ENCODE measurements at regions of chr6 and their contacts with region 1.

Region 1: GRCh38 chr6:144478483-144478882 is 193.3 kb downstream of the UTRN start:
- DNase-seq: peak; percentile 75
- ATAC-seq: peak; percentile 97

Region 2: DNA sequence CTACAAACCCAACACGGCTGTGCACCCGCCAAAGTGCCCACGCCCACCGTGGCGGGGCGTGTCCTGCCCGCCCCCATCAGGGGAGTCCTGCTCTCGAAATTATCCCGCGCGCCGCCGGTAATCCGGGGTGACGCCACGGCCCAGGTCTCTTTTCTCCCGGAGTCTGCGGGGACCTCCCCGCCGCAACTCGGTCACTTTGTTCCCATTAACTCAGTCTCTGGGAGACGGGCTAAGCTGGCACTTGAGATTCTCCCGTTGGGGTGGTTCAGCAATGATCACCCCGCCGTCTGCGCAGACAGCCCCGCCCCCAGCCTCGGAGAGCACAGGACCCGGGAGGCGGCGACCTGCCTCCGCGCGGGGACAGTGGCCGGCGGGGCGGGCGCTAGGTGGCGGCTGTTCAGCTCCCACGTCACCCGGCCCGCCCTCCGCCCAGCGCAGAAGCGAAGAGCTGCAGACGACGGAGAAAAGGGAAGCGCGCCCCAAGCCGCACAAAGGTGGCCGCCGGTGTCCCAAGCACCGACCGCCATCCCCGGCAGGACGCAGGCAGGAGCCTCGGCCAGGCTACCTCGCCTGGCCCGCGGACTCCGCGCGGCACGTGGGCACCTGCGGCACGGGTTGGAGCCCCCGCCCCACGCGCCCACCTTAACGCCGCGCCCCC is 414.6 kb before region 1 on chr6:
- intact Hi-C with region 1: no loop called
- DNase-seq: peak; percentile 96
- ATAC-seq: peak; percentile 97

Region 3: DNA sequence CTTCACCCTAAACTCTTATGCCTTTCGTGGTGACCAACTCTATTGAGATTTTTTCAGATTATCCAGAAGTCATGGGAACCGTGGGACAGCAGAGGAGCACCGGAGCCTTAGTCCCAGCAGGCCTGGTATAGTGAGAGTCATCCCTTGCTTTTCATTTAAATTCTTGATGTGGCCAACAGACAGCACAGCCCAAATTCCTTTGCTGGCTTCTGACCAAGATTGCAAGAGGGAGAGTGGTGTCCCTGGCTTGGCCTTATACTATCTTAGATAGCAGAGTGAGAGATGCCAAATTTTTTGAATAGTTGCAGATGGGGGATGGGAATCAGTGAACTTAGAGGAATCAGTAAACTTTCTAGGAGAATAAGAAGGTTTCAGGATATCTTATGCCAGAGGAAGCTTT is 320.4 kb before region 1 on chr6:
- intact Hi-C with region 1: loop called (anchors 5 kb)
- DNase-seq: peak; percentile 69
- ATAC-seq: peak; percentile 86

Region 4: GRCh38 chr6:144215932-144216667 is 262.4 kb before region 1 on chr6:
- intact Hi-C with region 1: loop called (anchors 2 kb)
- DNase-seq: peak; percentile 96
- ATAC-seq: peak; percentile 94

Region 5: GRCh38 chr6:144362042-144363018 is 116.2 kb before region 1 on chr6:
- intact Hi-C with region 1: no loop called
- DNase-seq: no peak
- ATAC-seq: peak; percentile 48

Measured in Right ventricle myocardium inferior (tissue), 1 donor.